ENCODE measurements at regions of chr13 and their contacts with region 1.

Region 1: GRCh38 chr13:94345374-94346195 is 133.9 kb downstream of the DCT start:
- DNase-seq: peak; percentile 28
- ATAC-seq: peak; percentile 63
- H3K4me3 Mint-ChIP-seq: no peak overlapping the region
- H3K27ac Mint-ChIP-seq: no peak overlapping the region
- H3K4me1 Mint-ChIP-seq: peaks cover 7% of the 10 kb centered on the region
- H3K27me3 Mint-ChIP-seq: peaks cover 4% of the 10 kb centered on the region

Region 2: GRCh38 chr13:94143624-94144350 is 201.8 kb before region 1 on chr13:
- CTCF ChIA-PET with region 1: no interaction called
- POLR2A ChIA-PET with region 1: no interaction called
- DNase-seq: no peak
- ATAC-seq: no peak
- H3K4me3 Mint-ChIP-seq: no peak overlapping the region
- H3K27ac Mint-ChIP-seq: no peak overlapping the region
- H3K4me1 Mint-ChIP-seq: no peaks in the 10 kb centered on the region
- H3K27me3 Mint-ChIP-seq: no peaks in the 10 kb centered on the region

Region 3: GRCh38 chr13:94329754-94330551 is 15.6 kb before region 1 on chr13:
- CTCF ChIA-PET with region 1: interaction called, 10 read pairs
- POLR2A ChIA-PET with region 1: no interaction called
- DNase-seq: no peak
- ATAC-seq: no peak
- H3K4me3 Mint-ChIP-seq: no peak overlapping the region
- H3K27ac Mint-ChIP-seq: no peak overlapping the region
- H3K4me1 Mint-ChIP-seq: peaks cover 60% of the 10 kb centered on the region
- H3K27me3 Mint-ChIP-seq: peaks cover 20% of the 10 kb centered on the region